Sigmoid colon (tissue), 7 donors: ENCODE measurements at regions of chr11 and their contacts with region 1.

Region 1: GRCh38 chr11:116835791-116836631 is 1.4 kb downstream of the APOA1 start:
- DNase-seq: peak; percentile 94
- H3K4me3 ChIP-seq: peak overlapping the region; percentile 0 to 44 (median 36)
- H3K27ac ChIP-seq: peak overlapping the region; percentile 78 to 82 (median 82)
- H3K4me1 ChIP-seq: peaks cover 0 to 19% (median 13%) of the 10 kb centered on the region in 4 donors
- H3K27me3 ChIP-seq: no peaks in the 10 kb centered on the region
- CTCF ChIP-seq: peak; percentile 39 to 53 (median 48)
- EP300 ChIP-seq: peak in 1 of 4 donors; percentile 43
- POLR2A ChIP-seq: no peak

Region 2: GRCh38 chr11:116787786-116788486 is 48.1 kb before region 1 on chr11 and contains the start of gene ZPR1:
- intact Hi-C with region 1: loop called (anchors 1 kb)
- DNase-seq: peak; percentile 92
- H3K4me3 ChIP-seq: peak within 1 kb of the TSS; percentile 86 to 97 (median 93)
- H3K27ac ChIP-seq: peak within 1 kb of the TSS; percentile 84 to 90 (median 88)
- H3K4me1 ChIP-seq: peaks cover 0 to 29% (median 20%) of the 10 kb centered on the region in 4 donors
- H3K27me3 ChIP-seq: no peaks in the 10 kb centered on the region
- CTCF ChIP-seq: peak in 1 of 4 experiments; percentile 15
- EP300 ChIP-seq: no peak
- POLR2A ChIP-seq: peak; percentile 66 to 68
- total RNA-seq, gene ZPR1: 14.7 to 28.6 (median 21.0) TPM